ENCODE measurements at regions of chr2 and their contacts with region 1.

Region 1: DNA sequence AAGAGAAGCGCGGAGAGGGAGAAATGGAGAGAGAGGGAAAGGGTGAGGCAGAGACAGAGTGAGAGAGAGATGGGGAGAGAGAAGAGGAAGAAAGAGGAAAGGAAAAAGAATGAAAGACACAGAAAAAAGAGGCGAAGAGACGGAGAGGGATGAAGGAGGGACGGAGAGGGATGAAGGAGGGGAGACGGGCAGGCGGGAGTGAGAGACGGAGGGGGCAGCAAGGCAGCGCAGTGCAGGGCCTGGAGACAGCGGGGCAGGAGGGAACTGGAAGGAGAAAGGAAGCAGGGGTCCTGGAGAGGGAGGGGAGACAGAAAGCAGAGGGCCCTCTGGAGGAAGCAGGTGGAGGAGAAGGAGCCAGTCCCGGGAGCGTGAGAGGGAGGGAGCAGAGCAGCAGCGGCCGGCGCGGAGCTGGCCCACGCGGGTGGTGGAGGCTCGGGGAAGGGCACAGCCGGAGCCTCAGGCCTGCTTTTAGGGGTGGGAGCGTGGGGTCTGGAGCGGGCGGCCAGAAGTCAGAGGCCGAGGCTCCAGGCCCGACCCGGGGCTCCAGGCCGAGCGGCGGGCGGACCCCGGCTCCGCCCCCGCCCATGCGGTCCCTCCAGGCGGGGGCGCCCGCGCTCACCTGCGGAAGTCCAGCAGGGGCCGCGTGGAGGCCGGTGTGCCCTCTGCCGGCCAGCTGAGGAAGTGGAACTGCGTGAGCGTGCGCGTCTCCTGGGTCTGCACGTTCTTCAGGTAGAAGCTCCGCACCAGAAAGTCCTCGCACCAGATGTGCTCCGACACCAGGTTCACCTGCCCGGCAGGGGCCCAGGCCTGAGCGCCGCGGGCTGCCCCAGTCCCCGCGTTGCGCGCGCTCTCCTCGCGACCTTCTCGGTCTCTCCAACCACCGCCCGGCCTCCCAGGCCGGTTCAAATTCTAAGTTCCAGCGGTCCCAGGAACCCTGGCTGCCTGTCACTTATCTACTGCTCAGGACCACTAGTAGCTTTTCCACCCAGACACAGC is 14.5 kb downstream of the PTPRN start:
- DNase-seq: peak; percentile 87 to 91
- ATAC-seq: peak; percentile 69 to 89
- H3K4me3 ChIP-seq: peak overlapping the region; percentile 48
- H3K27ac ChIP-seq: peak overlapping the region; percentile 94 to 99
- H3K4me1 ChIP-seq: peaks cover 23% of the 10 kb centered on the region
- CTCF ChIP-seq: peak; percentile 100
- EP300 ChIP-seq: 0 out of 5 replicates have a peak, but pooled peaks of 1 of the 2 experiments have one; percentile 10
- POLR2A ChIP-seq: peak; percentile 56
- RAD21 ChIP-seq: peak; percentile 74 to 93

Region 2: GRCh38 chr2:219155054-219155644 is 139.5 kb before region 1 on chr2:
- CTCF ChIA-PET with region 1: interaction called, 95 read pairs
- POLR2A ChIA-PET with region 1: no interaction called
- DNase-seq: peak; percentile 64 to 77
- ATAC-seq: peak; percentile 74 to 76
- H3K4me3 ChIP-seq: no peak overlapping the region
- H3K27ac ChIP-seq: no peak overlapping the region
- H3K4me1 ChIP-seq: peaks cover 4% of the 10 kb centered on the region; the same call in 1 of the 3 replicates
- CTCF ChIP-seq: peak; percentile 80
- EP300 ChIP-seq: no peak
- POLR2A ChIP-seq: no peak
- RAD21 ChIP-seq: peak; percentile 84 to 90

Region 3: GRCh38 chr2:219206442-219207253 is 88.0 kb before region 1 on chr2 and contains the start of gene ZFAND2B:
- CTCF ChIA-PET with region 1: interaction called, 56 read pairs
- POLR2A ChIA-PET with region 1: interaction called, 6 read pairs
- DNase-seq: peak; percentile 89 to 91
- ATAC-seq: peak; percentile 85 to 93
- H3K4me3 ChIP-seq: peak within 1 kb of the TSS; percentile 53
- H3K27ac ChIP-seq: peak within 1 kb of the TSS; percentile 95 to 98
- H3K4me1 ChIP-seq: peaks cover 16% of the 10 kb centered on the region
- CTCF ChIP-seq: no peak
- EP300 ChIP-seq: no peak
- POLR2A ChIP-seq: peak; percentile 96
- RAD21 ChIP-seq: no peak
- polyA plus RNA-seq, gene ZFAND2B: 29.1 and 30.3 TPM in 2 replicates

Region 4: GRCh38 chr2:219253753-219254590 is 40.7 kb before region 1 on chr2 and contains the start of gene TUBA4A:
- CTCF ChIA-PET with region 1: interaction called, 241 read pairs
- POLR2A ChIA-PET with region 1: interaction called, 21 read pairs
- DNase-seq: peak; percentile 81 to 83
- ATAC-seq: peak; percentile 62 to 82
- H3K4me3 ChIP-seq: peak within 1 kb of the TSS; percentile 71
- H3K27ac ChIP-seq: peak within 1 kb of the TSS; percentile 90
- H3K4me1 ChIP-seq: peaks cover 37% of the 10 kb centered on the region
- CTCF ChIP-seq: no peak
- EP300 ChIP-seq: no peak
- POLR2A ChIP-seq: peak; percentile 99
- RAD21 ChIP-seq: no peak
- polyA plus RNA-seq, gene TUBA4A: 222 and 251 TPM in 2 replicates

Region 5: GRCh38 chr2:219308142-219309093 is 13.8 kb after region 1 on chr2:
- CTCF ChIA-PET with region 1: interaction called, 20 read pairs
- POLR2A ChIA-PET with region 1: no interaction called
- DNase-seq: peak; percentile 68 to 70
- ATAC-seq: peak; percentile 94 to 95
- H3K4me3 ChIP-seq: peak overlapping the region; percentile 36
- H3K27ac ChIP-seq: peak overlapping the region in 1 of 2 experiments; percentile 38; a peak in 3 of 6 replicates
- H3K4me1 ChIP-seq: peaks cover 13% of the 10 kb centered on the region; the same call in 2 of the 3 replicates
- CTCF ChIP-seq: no peak
- EP300 ChIP-seq: no peak
- POLR2A ChIP-seq: no peak
- RAD21 ChIP-seq: no peak

Region 6: GRCh38 chr2:219362524-219363164 is 68.0 kb after region 1 on chr2:
- CTCF ChIA-PET with region 1: interaction called, 12 read pairs
- POLR2A ChIA-PET with region 1: no interaction called
- DNase-seq: peak in 1 of 2 experiments; percentile 60
- ATAC-seq: peak; percentile 72 to 84
- H3K4me3 ChIP-seq: no peak overlapping the region
- H3K27ac ChIP-seq: no peak overlapping the region
- H3K4me1 ChIP-seq: peaks cover 19% of the 10 kb centered on the region
- CTCF ChIP-seq: no peak
- EP300 ChIP-seq: no peak
- POLR2A ChIP-seq: no peak
- RAD21 ChIP-seq: no peak

Measured in A549 (cell line).